Activated T-helper 1 cell treated with anti-CD3 and anti-CD28 coated beads, Interleukin-12 subunit alpha, Interleukin-12 subunit beta, Interleukin-2, Interleukin-4 antibody, amounts not matched to agents 30 ng/mL and 10 ng/mL and 1 ng/mL, durations not matched to agents 14 hours and 24 hours and 36 hours (primary cell): ENCODE measurements at regions of chr17 and their contacts with region 1.

Region 1: GRCh38 chr17:4891411-4892342 is 7.7 kb upstream of the C17orf107 start:
- DNase-seq: no peak
- H3K4me3 Mint-ChIP-seq: no peak overlapping the region
- H3K27ac Mint-ChIP-seq: no peak overlapping the region
- H3K4me1 Mint-ChIP-seq: peaks cover 5% of the 10 kb centered on the region
- H3K27me3 Mint-ChIP-seq: no peaks in the 10 kb centered on the region

Region 2: DNA sequence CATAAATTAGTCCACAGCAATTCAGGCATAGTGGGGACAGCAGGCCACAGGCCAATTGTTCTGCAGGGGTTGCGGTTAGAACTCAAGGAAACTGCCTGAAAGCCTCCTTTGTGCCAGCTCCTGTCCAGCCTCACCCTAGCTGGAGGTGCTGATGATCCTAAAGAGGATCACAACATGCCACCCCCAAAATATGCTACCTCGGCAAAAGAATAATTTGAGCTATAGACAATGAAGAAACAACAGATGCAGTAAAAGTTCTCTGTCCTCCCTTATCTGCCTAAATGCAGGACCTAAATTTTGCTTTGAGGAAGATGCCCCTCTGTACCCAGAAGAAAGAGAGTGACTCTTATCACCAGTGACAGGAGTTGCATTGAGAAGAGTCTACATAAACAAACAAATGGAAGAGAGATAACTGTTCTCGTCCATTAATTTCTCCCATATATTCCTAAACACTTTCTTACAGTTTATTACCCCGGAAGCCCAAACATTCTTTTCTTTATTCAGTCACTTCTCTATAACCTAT is 264.9 kb before region 1 on chr17:
- intact Hi-C with region 1: loop called (anchors 1 kb)
- DNase-seq: no peak
- H3K4me3 Mint-ChIP-seq: no peak overlapping the region
- H3K27ac Mint-ChIP-seq: no peak overlapping the region
- H3K4me1 Mint-ChIP-seq: no peaks in the 10 kb centered on the region
- H3K27me3 Mint-ChIP-seq: peaks cover 20% of the 10 kb centered on the region

Region 3: GRCh38 chr17:4872786-4873185 is 18.9 kb before region 1 on chr17:
- intact Hi-C with region 1: no loop called
- DNase-seq: no peak
- H3K4me3 Mint-ChIP-seq: no peak overlapping the region
- H3K27ac Mint-ChIP-seq: no peak overlapping the region
- H3K4me1 Mint-ChIP-seq: peaks cover 4% of the 10 kb centered on the region
- H3K27me3 Mint-ChIP-seq: no peaks in the 10 kb centered on the region